IMR-90 (cell line): ENCODE measurements at regions of chr18 and their contacts with region 1.

Region 1: DNA sequence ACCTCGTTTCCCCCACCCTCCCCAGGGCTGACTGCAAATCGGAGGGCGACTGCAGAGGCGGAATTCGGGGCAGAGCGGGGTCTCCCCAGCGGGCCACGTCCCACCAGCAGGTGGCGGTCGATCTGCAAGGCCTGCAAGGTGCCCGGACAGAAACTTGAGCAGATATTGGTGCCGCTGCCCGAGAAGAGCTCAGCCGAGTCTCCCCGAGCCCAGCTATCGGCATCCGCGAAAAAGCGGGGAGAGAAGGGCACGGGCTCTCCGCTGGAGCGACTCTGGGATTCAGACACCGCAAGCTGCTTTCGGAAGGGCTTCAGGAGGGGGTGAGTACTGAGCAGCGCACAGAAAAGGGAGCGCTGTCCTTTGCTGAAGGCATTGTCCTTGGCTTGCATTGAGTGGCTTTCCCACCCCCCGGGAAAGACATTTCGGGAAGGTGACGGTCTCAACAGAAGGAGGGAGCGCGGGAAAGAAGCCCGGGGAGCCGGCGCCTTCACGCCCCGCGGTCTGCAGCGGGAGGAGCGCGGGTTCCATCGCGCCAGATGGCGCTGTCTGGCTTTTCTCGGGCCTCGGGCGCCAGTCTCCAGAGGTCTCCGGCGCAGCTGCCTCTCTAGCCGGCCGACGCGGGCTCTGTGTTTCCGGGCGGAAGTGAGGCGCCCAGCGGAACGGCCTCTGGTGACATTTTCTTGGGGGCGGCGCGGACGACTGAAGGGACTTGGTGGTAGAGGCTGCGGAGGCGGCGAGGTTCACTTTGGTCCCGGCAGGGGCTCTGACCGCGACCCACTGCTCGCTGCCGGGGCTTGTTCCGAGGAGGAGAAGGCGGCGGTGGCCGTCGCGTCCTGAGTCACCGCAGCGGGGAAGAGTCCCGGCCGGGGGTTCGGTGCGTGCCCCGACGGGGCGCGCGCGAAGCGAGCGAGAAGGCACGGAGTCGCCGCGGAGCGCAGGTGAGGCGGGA is 69.5 kb downstream of the HAUS1 start:
- DNase-seq: peak; percentile 89
- ATAC-seq: peak; percentile 92
- H3K4me3 ChIP-seq: peak overlapping the region; percentile 95
- H3K27ac ChIP-seq: peak overlapping the region; percentile 85
- H3K4me1 ChIP-seq: peaks cover 4% of the 10 kb centered on the region; the same call in 1 of the 2 replicates
- H3K27me3 ChIP-seq: no peaks in the 10 kb centered on the region
- CTCF ChIP-seq: peak; percentile 91
- POLR2A ChIP-seq: peak; percentile 83
- RAD21 ChIP-seq: peak; percentile 82

Region 2: GRCh38 chr18:46158498-46158897 is 15.2 kb before region 1 on chr18:
- CTCF ChIA-PET with region 1: interaction called, 12 read pairs
- POLR2A ChIA-PET with region 1: no interaction called
- dilution Hi-C with region 1: no loop called
- in situ Hi-C with region 1: no loop called
- intact Hi-C with region 1: no loop called
- DNase-seq: peak; percentile 26
- ATAC-seq: no peak
- H3K4me3 ChIP-seq: no peak overlapping the region
- H3K27ac ChIP-seq: no peak overlapping the region
- H3K4me1 ChIP-seq: peaks cover 9% of the 10 kb centered on the region
- H3K27me3 ChIP-seq: no peaks in the 10 kb centered on the region
- CTCF ChIP-seq: no peak
- POLR2A ChIP-seq: no peak
- RAD21 ChIP-seq: no peak

Region 3: DNA sequence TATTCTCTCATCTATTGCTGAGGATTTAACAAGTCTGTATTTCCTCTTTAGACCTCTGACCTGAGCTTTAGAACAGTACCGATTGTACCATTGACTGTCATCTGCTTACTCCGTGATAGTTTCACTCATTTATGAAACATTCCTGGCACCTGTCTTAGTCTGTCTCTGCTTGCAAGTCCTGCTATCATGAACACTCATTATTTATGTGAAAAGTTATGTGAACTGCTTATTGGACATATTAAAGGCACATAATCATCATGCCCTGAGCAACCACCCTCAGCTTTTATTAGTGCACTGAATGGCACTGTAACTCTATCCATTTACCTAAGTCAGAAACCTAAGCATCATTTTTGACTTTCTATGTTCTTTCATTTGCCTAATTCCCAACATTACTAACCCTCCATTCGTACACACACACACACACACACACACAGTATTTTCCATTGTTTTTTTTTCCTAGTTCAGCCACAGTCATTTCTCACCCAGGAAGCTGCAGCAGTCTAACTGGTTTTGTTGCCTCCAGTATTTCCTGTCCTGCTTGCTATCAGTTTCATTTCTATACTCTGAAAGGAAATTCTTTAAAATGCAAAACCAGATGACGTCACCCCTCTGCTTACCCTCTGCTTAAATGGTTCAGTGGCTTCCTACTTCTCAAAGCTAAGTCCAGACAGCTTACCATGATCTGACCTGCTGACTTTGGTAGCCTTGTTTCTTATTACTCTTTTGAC is 76.6 kb after region 1 on chr18:
- CTCF ChIA-PET with region 1: no interaction called
- POLR2A ChIA-PET with region 1: no interaction called
- dilution Hi-C with region 1: no loop called
- in situ Hi-C with region 1: no loop called
- intact Hi-C with region 1: loop called (anchors 5 kb)
- DNase-seq: peak; percentile 92
- ATAC-seq: peak; percentile 85
- H3K4me3 ChIP-seq: peak overlapping the region; percentile 22; the same call in 1 of the 2 replicates
- H3K27ac ChIP-seq: no peak overlapping the region; the same call in 1 of the 2 replicates
- H3K4me1 ChIP-seq: peaks cover 8% of the 10 kb centered on the region
- H3K27me3 ChIP-seq: no peaks in the 10 kb centered on the region
- CTCF ChIP-seq: no peak
- POLR2A ChIP-seq: no peak
- RAD21 ChIP-seq: no peak

Region 4: GRCh38 chr18:46281185-46282176 is 107.8 kb after region 1 on chr18:
- CTCF ChIA-PET with region 1: interaction called, 13 read pairs
- POLR2A ChIA-PET with region 1: no interaction called
- dilution Hi-C with region 1: no loop called
- in situ Hi-C with region 1: no loop called
- intact Hi-C with region 1: loop called (anchors 1 kb)
- DNase-seq: peak; percentile 79
- ATAC-seq: peak; percentile 94
- H3K4me3 ChIP-seq: no peak overlapping the region
- H3K27ac ChIP-seq: no peak overlapping the region
- H3K4me1 ChIP-seq: peaks cover 14% of the 10 kb centered on the region
- H3K27me3 ChIP-seq: no peaks in the 10 kb centered on the region
- CTCF ChIP-seq: peak; percentile 83
- POLR2A ChIP-seq: no peak
- RAD21 ChIP-seq: peak; percentile 91

Region 5: DNA sequence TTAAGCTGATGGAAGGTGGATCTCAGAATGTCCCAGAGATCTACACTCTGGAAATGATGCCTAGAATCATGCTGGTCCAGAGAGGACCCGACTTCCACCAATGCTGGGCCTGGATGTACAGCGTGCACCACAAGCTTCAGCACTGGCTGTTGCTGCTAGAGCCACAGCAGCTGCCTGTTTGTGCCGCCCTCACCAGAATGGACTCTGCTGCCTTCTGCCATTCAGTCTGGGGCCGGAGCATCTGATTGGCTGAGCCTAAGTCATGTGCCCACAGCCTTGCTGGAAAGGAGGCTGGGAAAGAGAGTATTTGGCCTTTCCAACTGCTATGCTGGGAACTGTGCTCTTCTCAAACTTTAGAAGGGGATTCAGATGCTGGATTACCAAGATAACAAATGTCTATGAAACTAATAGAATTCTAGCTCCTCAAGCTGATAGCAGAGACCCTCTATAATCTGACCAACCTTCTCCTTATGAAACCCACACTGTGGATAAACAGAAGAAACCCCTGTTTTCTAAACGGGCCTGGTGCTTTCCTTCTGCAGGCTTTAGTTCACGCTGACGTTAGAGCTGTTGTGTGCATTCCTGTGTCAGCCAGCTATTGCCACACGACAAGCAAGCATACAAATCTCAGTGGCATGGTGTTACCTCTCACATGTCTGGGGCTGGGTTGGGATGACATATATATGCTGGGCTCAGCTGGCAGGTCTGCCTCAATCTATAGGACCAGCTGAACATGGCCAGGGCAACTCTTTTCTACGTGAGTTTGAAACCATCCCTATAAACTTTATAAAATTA is 487.5 kb after region 1 on chr18:
- CTCF ChIA-PET with region 1: interaction called, 5 read pairs
- POLR2A ChIA-PET with region 1: no interaction called
- dilution Hi-C with region 1: no loop called
- in situ Hi-C with region 1: no loop called
- intact Hi-C with region 1: loop called (anchors 1 kb)
- DNase-seq: peak; percentile 31
- ATAC-seq: peak; percentile 65
- H3K4me3 ChIP-seq: no peak overlapping the region
- H3K27ac ChIP-seq: no peak overlapping the region
- H3K4me1 ChIP-seq: no peaks in the 10 kb centered on the region
- H3K27me3 ChIP-seq: peaks cover 4% of the 10 kb centered on the region; the same call in 1 of the 2 replicates
- CTCF ChIP-seq: no peak
- POLR2A ChIP-seq: no peak
- RAD21 ChIP-seq: no peak